Activated CD4-positive, alpha-beta T cell treated with anti-CD3 and anti-CD28 coated beads, Interleukin-2, amount 10 ng/mL, durations not matched to agents 24 days and 14 days (primary cell): ENCODE measurements at regions of chr17 and their contacts with region 1.

Region 1: GRCh38 chr17:75154195-75155106 is at the start of gene JPT1:
- DNase-seq: peak; percentile 99
- H3K4me3 Mint-ChIP-seq: peak within 1 kb of the TSS; percentile 98
- H3K27ac Mint-ChIP-seq: peak within 1 kb of the TSS; percentile 96
- H3K4me1 Mint-ChIP-seq: peaks cover 30% of the 10 kb centered on the region
- H3K27me3 Mint-ChIP-seq: no peaks in the 10 kb centered on the region
- total RNA-seq, gene JPT1: 271 and 292 TPM in 2 replicates

Region 2: GRCh38 chr17:75131280-75132017 is 23.0 kb before region 1 on chr17 and contains the start of gene NT5C:
- intact Hi-C with region 1: loop called (anchors 2 kb)
- DNase-seq: peak; percentile 92
- H3K4me3 Mint-ChIP-seq: peak within 1 kb of the TSS; percentile 91
- H3K27ac Mint-ChIP-seq: peak within 1 kb of the TSS; percentile 88
- H3K4me1 Mint-ChIP-seq: peaks cover 19% of the 10 kb centered on the region
- H3K27me3 Mint-ChIP-seq: no peaks in the 10 kb centered on the region
- total RNA-seq, gene NT5C: 76.5 and 84.7 TPM in 2 replicates

Region 3: GRCh38 chr17:75173526-75173925 is 19.1 kb after region 1 on chr17:
- intact Hi-C with region 1: loop called (anchors 2 kb)
- DNase-seq: no peak
- H3K4me3 Mint-ChIP-seq: no peak overlapping the region
- H3K27ac Mint-ChIP-seq: peak overlapping the region; percentile 12
- H3K4me1 Mint-ChIP-seq: peaks cover 17% of the 10 kb centered on the region
- H3K27me3 Mint-ChIP-seq: no peaks in the 10 kb centered on the region